ENCODE measurements at regions of chrX and their contacts with region 1.

Region 1: DNA sequence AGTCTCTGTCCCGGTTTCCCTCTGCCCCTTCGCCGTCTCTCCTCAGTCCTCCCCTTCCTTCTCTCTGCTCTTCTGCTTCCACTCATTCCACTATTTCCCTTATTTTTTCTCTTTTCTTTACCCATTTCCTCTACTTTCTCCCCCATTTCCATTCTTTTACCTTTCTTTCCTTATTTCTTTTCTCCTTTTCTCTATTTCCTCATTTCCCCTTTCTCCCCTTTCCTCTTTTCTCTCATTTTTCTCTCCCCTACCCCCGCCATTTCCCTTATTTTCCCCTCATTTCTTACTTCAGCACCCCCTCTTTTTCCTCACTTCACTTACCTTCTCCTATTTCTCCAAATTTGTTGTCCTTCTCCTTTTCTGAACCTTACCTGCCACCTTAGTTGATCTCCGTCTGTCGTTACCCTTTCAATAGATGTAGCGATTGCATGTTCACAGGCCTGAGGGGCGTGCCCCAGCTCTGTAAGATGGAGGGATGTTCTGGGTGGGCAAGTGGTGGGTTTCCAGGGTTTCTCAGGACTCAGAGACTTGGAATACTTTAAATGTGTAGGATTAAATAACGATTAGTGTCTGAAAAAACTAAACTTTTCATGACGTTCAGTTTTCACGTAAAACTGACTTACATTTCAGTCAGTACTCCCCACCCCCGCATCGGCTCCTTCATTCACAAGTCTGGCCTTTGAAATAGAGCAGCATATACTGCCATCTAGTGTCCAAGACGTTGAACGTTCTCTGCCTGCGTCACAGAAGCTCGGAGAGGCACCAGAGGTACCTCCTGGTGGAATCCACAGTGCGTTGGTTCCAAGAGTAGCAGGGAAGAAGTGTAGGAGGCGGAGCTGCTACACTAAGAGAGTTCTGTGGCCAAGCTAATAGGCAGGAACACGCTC is 641 bp upstream of the NCBP2L start:
- DNase-seq: peak; percentile 87
- H3K4me3 Mint-ChIP-seq: peak overlapping the region; percentile 76
- H3K27ac Mint-ChIP-seq: peak overlapping the region; percentile 41
- H3K4me1 Mint-ChIP-seq: peaks cover 18% of the 10 kb centered on the region
- H3K27me3 Mint-ChIP-seq: peaks cover 45% of the 10 kb centered on the region
- CTCF ChIP-seq: peak; percentile 75

Region 2: GRCh38 chrX:106894392-106894909 is 882.4 kb before region 1 on chrX:
- CTCF ChIA-PET with region 1: interaction called, 3 read pairs
- POLR2A ChIA-PET with region 1: interaction called, 3 read pairs
- intact Hi-C with region 1: loop called (anchors 2 kb)
- DNase-seq: peak; percentile 79
- H3K4me3 Mint-ChIP-seq: no peak overlapping the region
- H3K27ac Mint-ChIP-seq: peak overlapping the region; percentile 25
- H3K4me1 Mint-ChIP-seq: peaks cover 21% of the 10 kb centered on the region
- H3K27me3 Mint-ChIP-seq: peaks cover 53% of the 10 kb centered on the region
- CTCF ChIP-seq: peak; percentile 83

Region 3: GRCh38 chrX:107654872-107655761 is 121.8 kb before region 1 on chrX:
- CTCF ChIA-PET with region 1: interaction called, 139 read pairs
- POLR2A ChIA-PET with region 1: interaction called, 9 read pairs
- intact Hi-C with region 1: loop called (anchors 1 kb)
- DNase-seq: peak; percentile 84
- H3K4me3 Mint-ChIP-seq: peak overlapping the region; percentile 45
- H3K27ac Mint-ChIP-seq: peak overlapping the region; percentile 89
- H3K4me1 Mint-ChIP-seq: peaks cover 15% of the 10 kb centered on the region
- H3K27me3 Mint-ChIP-seq: peaks cover 44% of the 10 kb centered on the region
- CTCF ChIP-seq: peak; percentile 66

Region 4: DNA sequence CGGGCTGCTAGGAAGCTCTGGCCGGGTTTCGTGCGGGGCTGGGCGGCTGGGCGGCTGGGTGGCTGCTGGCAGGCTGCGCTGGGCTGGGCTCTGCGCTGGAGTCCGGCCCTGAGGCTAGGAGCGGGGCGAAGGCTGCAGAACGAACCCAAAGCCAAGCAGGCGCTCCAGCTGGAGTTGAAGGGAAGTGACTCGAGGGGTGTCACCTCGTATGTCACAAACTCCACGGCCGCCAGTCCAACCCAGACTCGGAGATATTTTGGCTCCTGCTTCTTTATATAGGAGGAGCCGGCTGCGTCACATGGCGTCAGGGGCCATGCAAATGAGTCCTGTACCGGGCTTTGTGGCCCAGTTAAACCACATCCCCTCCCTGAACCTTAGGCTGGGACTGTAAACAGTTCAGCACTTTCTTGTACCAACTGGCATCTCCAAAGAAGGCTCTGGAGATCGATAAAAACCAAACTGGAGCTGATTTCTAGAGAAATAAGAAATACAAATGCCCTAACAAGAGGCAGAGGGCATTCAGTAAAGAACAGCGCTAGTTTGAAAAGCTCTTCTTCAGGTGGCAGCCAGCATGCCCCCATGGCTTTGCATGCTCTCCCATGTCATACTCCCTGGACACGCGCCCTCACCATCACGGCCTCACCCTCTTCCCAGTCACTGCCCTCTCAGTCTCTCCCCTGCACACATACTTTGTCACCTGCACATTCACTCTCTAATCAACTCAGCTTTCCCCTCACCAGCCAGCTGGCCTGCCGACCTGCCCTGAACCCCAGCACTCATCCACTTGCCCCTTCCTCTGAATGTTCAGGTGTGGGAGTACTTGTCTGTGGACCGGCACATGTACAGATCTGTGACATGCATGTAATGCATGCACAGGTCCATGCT is 59.8 kb before region 1 on chrX:
- CTCF ChIA-PET with region 1: interaction called, 50 read pairs
- POLR2A ChIA-PET with region 1: interaction called, 106 read pairs
- intact Hi-C with region 1: loop called (anchors 1 kb)
- DNase-seq: peak; percentile 84
- H3K4me3 Mint-ChIP-seq: peak overlapping the region; percentile 74
- H3K27ac Mint-ChIP-seq: peak overlapping the region; percentile 60
- H3K4me1 Mint-ChIP-seq: peaks cover 21% of the 10 kb centered on the region
- H3K27me3 Mint-ChIP-seq: peaks cover 42% of the 10 kb centered on the region
- CTCF ChIP-seq: no peak

Region 5: DNA sequence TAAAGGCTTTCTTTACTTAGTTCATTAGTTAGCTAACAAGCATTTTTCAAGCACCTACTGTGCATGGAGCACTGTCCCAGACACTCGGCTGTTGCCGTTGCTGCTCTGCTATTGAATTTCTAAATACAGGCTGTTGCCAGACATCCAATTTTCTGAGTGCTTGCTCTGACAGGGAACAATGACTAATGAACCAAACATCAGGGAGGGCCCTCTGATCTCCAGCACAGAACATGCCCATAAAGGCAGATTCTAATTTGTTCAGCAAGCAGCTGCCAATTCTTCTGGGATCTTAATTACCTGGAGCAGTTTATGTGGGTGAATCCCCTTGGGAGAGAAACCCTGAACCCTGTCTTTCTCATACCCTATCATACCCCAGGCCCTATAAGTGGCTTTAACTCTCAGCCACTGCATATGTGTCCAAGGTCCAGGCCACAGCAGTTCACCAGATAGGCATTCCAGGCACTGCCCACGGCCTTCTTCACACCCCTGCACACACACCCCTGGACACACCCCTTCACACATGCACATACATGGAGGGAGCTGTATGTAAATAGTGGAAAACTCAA is 29.2 kb before region 1 on chrX:
- CTCF ChIA-PET with region 1: interaction called, 8 read pairs
- POLR2A ChIA-PET with region 1: interaction called, 35 read pairs
- intact Hi-C with region 1: no loop called
- DNase-seq: peak; percentile 68
- H3K4me3 Mint-ChIP-seq: peak overlapping the region; percentile 5
- H3K27ac Mint-ChIP-seq: peak overlapping the region; percentile 88
- H3K4me1 Mint-ChIP-seq: peaks cover 27% of the 10 kb centered on the region
- H3K27me3 Mint-ChIP-seq: peaks cover 61% of the 10 kb centered on the region
- CTCF ChIP-seq: no peak

Region 6: DNA sequence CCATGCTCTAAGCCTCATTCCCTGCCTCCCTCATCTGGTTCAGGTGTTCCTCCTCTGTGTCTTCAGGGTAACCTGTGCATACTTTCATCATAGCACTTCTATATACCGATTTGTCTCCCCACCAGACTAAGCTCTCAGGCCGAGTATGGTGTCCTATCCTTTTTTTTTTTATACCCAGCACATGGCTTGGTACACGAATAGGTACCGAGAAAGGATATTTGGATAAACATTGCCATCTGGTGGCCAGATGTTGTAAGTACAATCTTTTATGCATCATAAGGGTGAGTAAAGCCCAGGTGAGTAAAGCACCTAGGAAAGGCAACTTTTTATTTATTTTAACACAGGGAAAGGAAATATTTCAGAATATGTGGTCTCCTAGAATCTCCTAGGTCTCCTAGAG is 117.1 kb after region 1 on chrX:
- CTCF ChIA-PET with region 1: interaction called, 4 read pairs
- POLR2A ChIA-PET with region 1: no interaction called
- intact Hi-C with region 1: loop called (anchors 1 kb)
- DNase-seq: peak; percentile 71
- H3K4me3 Mint-ChIP-seq: no peak overlapping the region
- H3K27ac Mint-ChIP-seq: no peak overlapping the region
- H3K4me1 Mint-ChIP-seq: no peaks in the 10 kb centered on the region
- H3K27me3 Mint-ChIP-seq: peaks cover 59% of the 10 kb centered on the region
- CTCF ChIP-seq: peak; percentile 46

Region 7: DNA sequence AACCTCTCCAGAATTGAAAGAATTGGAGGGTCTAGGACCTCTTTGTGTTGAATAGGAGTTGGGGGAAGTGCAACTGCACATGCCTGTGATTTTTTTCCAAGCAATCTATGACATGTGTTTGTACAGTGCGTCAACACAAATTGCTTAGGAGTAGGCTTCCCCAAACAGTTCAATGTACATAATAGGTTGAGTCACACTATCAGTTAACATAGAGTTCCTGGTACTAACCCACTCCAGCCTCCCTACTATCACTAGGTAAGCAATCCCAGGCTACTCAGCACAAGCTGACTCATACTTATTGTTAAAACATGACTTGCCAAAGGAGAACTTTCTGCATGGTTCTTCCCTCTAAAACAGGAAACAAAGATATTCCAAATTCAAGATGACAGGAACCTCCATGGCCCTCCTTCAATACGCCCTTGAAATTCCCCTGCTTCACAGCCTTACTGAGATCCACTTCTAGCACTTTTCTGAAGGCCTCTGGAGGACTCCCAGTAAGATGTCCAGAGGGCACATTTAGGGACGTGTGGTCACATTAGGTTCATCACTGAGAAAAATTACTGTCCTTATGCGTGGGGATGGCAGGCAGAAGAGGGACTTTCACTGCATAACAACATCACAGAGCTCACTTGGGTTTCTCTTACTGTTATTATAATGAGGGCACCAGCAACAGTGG is 259.5 kb after region 1 on chrX:
- CTCF ChIA-PET with region 1: no interaction called
- POLR2A ChIA-PET with region 1: no interaction called
- intact Hi-C with region 1: no loop called
- DNase-seq: peak; percentile 80
- H3K4me3 Mint-ChIP-seq: no peak overlapping the region
- H3K27ac Mint-ChIP-seq: peak overlapping the region; percentile 29
- H3K4me1 Mint-ChIP-seq: peaks cover 10% of the 10 kb centered on the region
- H3K27me3 Mint-ChIP-seq: peaks cover 75% of the 10 kb centered on the region
- CTCF ChIP-seq: no peak